ENCODE measurements at regions of chr12 and their contacts with region 1.

Region 1: DNA sequence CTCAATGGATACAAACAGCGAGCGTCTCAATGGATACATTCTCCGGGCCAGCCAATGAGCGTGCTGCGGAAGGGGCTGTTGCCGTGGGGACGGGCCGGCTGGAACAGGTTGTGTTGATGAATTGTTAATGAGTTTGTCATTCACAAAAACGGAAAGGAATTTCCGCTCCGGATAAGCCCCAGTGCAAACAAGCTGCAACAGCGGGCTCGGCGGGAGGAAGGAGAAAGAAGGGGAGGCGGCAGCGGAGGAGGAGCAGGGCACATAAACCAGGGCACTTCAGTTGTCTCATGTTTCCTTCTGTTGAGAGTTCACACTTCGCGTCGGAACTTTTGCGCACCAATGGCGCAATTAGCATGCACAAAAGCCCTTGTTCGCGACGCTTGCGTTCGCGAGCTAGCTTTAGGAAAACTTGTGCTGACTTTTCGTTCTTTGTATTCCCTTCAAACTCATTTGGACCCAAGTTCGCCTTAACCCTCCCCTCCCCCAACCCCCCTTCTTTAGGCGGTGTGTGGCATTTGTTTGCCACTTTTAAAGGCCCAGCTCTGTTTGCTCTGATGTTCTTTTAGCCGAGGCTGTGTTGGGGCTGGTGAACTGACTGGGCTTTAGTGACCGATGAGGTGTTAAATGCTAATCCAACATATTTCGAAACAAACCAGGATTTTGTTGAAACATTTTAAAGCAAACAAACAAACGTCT is at the start of gene DUSP6:
- DNase-seq: peak; percentile 74 to 98 (median 93)

Region 2: GRCh38 chr12:89051065-89051677 is 301.5 kb before region 1 on chr12:
- intact Hi-C with region 1: loop called (anchors 10 kb)
- DNase-seq: peak in 17 of 42 donors; percentile 8 to 61 (median 36)

Region 3: DNA sequence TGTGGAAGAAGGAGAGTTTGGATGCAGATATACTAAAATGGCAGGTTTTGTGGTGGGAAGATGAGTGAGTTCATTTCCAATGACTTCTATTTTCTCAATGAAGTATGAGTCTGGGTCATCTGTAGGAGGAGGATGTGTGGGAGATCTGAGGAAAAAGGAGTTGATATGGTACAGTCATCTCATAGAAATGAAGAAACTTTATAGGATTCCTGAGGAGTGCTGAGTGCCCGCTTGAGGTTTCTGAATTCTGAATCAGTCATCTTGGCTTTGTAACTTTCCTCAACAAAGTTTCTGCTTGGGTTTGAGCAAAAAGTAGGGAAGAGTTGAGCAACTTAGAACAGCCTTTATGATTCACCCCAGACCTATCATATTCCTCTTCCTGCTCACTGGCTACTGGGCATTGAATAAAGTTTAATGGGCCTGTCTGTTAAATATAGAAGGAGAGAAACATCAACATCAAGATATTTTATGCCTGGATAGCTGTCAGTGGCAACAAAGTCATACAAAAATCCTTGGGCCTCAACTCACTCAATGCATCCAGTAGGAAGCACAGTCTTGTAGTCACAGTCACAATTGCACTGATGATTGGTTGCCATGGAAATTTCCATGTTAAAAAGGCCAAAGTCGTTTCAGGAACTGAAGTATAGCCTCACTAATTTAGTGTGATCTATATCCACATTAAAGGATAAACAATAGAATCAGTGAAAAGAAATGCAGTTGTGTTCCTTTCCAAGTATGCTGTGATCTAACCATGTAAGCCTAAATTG is 285.0 kb before region 1 on chr12:
- intact Hi-C with region 1: no loop called
- DNase-seq: no peak

Region 4: DNA sequence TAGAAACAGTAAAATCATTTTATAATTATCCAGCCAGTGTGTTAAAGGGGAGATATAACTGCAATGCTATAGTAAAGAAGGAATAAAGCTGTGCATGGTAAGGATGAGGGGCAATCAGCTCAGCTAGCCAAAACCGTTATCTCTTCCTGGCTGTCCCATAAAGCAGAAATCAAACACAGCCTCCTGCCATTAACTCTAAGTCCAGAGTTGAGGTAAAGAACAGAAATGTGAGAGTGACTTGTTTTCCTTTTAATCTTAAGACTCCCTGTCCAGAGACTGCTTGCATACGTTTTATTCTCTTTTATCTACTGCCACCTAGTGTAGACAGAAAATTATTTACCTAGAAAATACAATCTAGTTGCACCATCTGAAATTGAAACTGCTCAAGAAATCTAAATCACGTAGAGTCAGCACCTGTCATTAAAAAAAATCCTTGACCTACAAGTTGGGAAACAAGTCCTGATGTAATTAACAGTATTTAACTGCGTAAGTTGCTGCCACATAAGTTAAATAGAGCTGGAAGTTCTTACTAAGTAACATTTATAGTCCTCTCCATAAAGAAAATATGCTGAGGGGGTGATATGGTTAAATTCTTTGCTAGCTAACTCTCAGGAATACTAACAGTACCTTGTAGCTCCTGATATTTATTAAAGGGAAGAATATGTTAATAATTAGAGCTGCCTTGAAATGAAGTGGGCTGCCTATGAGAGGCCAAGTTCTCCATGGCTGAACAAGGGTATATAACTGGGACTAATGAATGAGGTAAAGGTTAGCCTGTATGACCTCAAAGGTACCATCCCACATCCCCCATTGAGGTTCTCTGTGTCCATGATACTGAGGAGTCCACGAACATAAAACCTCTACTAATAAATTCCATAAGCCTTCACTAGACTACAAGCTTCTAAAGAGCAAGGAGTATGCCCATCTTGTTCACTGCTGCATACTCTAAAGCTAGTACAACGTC is 109.3 kb after region 1 on chr12:
- intact Hi-C with region 1: loop called (anchors 5 kb)
- DNase-seq: no peak

Region 5: GRCh38 chr12:89524541-89525285 is 172.1 kb after region 1 on chr12 and contains the start of gene GALNT4:
- intact Hi-C with region 1: loop called (anchors 5 kb)
- DNase-seq: peak; percentile 61 to 91 (median 80)

Measured in head of caudate nucleus (tissue), 42 donors.